Endothelial cell of umbilical vein (primary cell): ENCODE measurements at regions of chr9 and their contacts with region 1.

Region 1: DNA sequence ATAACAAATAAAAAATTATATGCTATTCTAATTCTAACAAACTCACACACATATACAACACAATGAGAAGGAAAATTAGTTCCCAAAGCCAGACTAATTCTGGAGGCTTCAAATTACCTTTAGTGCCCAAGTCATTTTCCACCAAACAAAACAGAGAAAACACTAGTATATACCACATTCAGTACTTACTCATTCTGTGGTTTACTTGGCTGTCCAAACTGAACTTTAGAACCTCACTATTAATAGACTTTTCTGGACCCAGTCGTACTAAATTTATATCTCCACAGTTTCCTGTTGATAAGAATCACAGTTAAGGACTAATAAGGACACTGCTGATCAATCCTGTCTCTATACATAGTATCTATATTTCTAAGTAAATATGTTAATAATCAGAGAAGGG is 66.4 kb downstream of the SETX start:
- DNase-seq: no peak
- H3K4me3 ChIP-seq: no peak overlapping the region
- H3K27ac ChIP-seq: no peak overlapping the region
- H3K4me1 ChIP-seq: no peaks in the 10 kb centered on the region
- H3K27me3 ChIP-seq: no peaks in the 10 kb centered on the region
- CTCF ChIP-seq: no peak
- POLR2A ChIP-seq: no peak

Region 2: GRCh38 chr9:131773911-131774379 is 514.4 kb before region 1 on chr9:
- CTCF ChIA-PET with region 1: no interaction called
- POLR2A ChIA-PET with region 1: no interaction called
- dilution Hi-C with region 1: no loop called
- intact Hi-C with region 1: no loop called
- DNase-seq: peak; percentile 42
- H3K4me3 ChIP-seq: no peak overlapping the region
- H3K27ac ChIP-seq: no peak overlapping the region
- H3K4me1 ChIP-seq: no peaks in the 10 kb centered on the region
- H3K27me3 ChIP-seq: no peaks in the 10 kb centered on the region
- CTCF ChIP-seq: no peak
- POLR2A ChIP-seq: no peak

Region 3: DNA sequence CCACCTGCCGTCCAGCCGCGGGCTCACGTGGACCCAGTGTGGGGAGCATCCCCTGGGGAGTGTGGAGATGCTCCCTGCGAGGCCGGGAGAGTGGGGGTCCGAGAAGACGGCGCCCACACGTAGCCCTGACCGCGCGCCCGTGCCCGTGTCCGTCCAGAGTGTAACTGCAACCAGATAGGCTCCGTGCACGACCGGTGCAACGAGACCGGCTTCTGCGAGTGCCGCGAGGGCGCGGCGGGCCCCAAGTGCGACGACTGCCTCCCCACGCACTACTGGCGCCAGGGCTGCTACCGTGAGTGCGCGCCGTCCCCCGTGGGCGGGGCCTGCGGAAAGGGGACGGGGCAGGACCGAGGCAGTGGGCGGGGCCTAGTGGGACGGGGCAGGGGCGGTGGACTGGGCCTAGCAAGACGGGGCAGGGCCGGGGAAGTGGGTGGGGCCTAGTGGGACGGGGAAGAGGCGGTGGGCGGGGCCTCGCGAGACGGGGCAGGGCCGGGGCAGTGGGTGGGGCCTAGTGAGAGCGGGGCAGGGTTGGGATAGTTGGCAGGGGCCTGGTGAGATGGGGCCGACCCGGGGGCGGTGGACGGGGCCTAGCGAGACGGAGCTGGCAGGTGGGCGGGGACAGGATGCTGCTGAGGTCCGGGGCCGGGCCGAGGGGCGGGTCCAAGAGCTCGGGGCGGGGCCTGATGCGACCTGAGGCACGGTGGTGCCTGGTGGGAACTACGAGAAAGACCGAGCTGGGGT is 47.4 kb before region 1 on chr9:
- CTCF ChIA-PET with region 1: no interaction called
- POLR2A ChIA-PET with region 1: no interaction called
- dilution Hi-C with region 1: no loop called
- intact Hi-C with region 1: no loop called
- DNase-seq: peak; percentile 92
- H3K4me3 ChIP-seq: peak overlapping the region; percentile 41 to 63 (median 54)
- H3K27ac ChIP-seq: no peak overlapping the region
- H3K4me1 ChIP-seq: peaks cover 7% of the 10 kb centered on the region
- H3K27me3 ChIP-seq: peaks cover 4 to 5% of the 10 kb centered on the region in 2 experiments
- CTCF ChIP-seq: no peak
- POLR2A ChIP-seq: no peak

Region 4: GRCh38 chr9:132268725-132269352 is 19.5 kb before region 1 on chr9:
- CTCF ChIA-PET with region 1: interaction called, 11 read pairs
- POLR2A ChIA-PET with region 1: no interaction called
- dilution Hi-C with region 1: no loop called
- intact Hi-C with region 1: no loop called
- DNase-seq: peak; percentile 74
- H3K4me3 ChIP-seq: no peak overlapping the region
- H3K27ac ChIP-seq: no peak overlapping the region
- H3K4me1 ChIP-seq: peaks cover 7% of the 10 kb centered on the region
- H3K27me3 ChIP-seq: no peaks in the 10 kb centered on the region
- CTCF ChIP-seq: peak; percentile 85 to 93
- POLR2A ChIP-seq: no peak

Region 5: DNA sequence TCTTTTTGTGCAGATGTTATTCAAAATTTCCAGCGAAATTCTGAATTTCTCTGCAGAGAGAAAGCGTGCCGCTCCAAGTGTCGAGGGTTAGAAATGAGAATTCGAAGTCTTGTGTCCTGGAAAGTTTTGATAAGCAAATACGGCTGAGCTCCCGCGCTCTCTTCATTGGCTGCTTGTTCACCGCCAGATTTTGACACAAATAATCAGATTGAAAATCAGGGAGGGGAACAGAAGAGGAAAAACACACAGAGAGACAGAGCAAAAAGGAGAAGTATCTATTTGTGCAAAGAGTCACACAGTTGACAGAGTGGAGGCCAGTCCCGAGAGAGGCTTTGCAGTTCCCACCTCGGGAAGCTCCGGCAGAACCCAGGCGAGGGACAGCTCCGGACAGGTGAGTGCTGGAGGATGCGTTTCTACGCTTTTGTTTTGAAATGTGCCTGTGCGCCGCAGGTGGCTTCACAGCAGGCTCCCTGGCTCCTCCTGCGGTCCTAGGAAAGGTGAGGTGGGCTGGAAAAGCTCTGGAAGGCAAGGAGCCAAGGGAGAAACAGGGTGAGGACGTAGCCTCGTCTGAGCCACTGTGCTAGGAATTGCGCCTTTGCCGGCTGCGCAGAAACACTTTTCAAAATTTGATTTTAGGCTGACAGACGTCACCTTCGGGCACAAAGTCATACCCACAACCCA is 690.2 kb after region 1 on chr9 and contains the start of gene GFI1B:
- CTCF ChIA-PET with region 1: no interaction called
- POLR2A ChIA-PET with region 1: no interaction called
- dilution Hi-C with region 1: no loop called
- intact Hi-C with region 1: no loop called
- DNase-seq: no peak
- H3K4me3 ChIP-seq: no peak within 1 kb of the TSS
- H3K27ac ChIP-seq: no peak within 1 kb of the TSS
- H3K4me1 ChIP-seq: no peaks in the 10 kb centered on the region
- H3K27me3 ChIP-seq: peaks cover 22 to 28% of the 10 kb centered on the region in 2 experiments
- CTCF ChIP-seq: no peak
- POLR2A ChIP-seq: no peak
- total RNA-seq, gene GFI1B: not detected in 2 replicates